Head of caudate nucleus (tissue), 42 donors: ENCODE measurements at regions of chr2 and their contacts with region 1.

Region 1: DNA sequence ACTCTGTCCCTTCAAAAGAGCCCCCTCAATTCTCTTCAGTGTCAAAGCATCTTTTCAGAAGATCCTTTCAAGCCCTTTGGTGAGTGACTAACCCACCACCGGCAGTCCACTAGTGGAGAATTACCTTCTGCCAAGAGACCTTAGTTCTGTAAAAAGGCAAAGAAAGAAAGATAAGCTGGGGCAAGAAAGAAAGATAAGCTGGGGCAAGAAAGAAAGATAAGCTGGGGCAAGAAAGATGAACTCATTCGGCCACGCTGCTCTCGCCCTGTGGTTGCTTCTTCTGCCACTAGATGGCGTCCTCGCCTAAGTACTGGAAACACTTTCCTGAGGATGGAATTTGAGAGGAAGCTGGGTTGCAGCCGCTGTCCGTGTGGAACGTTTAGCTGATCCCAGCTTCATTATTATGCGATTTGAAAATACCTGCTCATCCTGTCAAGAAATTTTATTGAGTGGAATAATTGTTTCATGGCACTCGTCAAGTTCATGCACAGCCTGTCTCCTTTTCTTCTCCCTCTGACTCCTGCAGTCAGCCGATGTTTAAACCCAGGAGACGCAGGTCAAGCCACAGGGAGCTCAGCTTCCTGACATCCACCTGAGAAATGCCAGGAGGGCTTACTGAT is 17.3 kb upstream of the ANXA4 start:
- DNase-seq: peak; percentile 66 to 97 (median 93)

Region 2: DNA sequence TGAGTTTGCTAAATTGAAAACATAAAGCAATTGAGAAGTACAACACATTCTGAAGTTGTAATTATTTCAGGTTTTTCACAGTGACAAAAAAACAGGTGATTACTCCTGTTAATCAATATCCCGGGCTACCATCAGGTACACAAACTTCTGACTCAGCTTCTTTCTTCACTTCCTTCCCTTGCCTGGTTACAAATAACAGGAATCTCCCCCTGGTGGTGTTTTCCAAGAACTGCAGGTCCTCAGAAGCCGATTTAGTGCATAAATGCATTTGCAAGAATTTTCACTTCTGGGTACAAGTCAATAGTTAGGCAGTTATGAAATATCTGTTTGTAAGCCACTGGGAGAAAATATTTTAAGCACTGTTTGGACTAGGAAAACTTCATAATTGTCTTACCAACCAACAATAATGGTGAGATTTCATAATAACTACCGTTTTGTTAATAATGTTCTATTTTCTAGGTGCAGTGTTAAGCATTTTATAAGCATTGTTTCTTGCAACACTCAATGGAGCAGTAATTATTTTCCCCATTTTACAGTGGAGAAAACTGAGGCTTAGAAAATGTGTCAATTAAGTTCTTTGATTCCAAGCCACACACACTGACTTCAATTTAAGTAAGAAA is 92.4 kb after region 1 on chr2:
- intact Hi-C with region 1: loop called (anchors 5 kb)
- DNase-seq: peak in 41 of 42 donors; percentile 27 to 95 (median 82)

Region 3: GRCh38 chr2:69902213-69902922 is 177.7 kb after region 1 on chr2:
- intact Hi-C with region 1: loop called (anchors 10 kb)
- DNase-seq: peak in 28 of 42 donors; percentile 17 to 66 (median 35)